ENCODE measurements at regions of chr7 and their contacts with region 1.

Region 1: DNA sequence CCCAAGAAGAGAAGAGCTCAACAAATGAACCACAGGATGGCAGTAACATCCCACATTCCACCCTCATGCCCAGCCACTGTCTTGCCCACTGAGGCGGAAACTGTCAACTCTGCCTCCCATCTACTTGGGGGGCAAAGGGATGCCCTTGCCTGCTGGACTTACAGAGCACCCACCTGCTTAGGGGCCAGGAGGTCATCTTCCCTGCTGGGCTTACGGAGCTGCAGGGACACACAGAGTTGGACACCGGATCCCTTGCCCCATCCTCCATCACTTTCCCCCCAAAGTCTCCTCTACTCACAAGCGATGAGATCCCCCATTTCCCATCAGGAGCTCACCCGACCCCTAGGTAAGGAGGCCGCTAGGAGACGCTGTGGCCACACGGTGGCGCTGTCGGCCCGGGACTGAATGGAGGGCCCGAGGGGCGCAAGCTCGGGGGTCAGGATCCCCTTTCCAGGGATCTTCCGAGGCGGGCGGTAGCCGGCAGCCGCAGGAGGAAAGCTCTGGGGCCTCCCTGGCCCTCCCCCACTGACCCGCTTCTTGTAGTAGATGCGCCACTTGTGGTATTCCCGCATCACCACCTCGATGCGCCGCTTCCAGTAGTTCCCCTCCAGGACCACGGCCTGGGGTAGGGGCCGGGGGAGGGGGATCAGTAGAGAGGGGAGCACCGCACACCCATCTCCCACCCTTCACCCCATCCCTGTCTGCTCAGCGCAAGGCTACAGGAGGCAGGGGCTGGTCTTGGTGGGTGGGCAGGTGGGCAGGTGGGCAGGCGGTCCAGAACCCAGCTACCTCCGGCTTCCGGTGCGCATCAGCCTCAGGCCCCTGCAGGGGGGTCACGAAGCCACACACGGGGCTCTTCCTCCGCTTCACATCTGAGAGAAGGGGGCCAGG is 17.3 kb downstream of the MLXIPL start:
- H3K4me3 ChIP-seq: no peak overlapping the region
- H3K27ac ChIP-seq: no peak overlapping the region
- H3K4me1 ChIP-seq: no peaks in the 10 kb centered on the region
- CTCF ChIP-seq: peak; percentile 52; the same call in 1 of the 2 replicates

Region 2: DNA sequence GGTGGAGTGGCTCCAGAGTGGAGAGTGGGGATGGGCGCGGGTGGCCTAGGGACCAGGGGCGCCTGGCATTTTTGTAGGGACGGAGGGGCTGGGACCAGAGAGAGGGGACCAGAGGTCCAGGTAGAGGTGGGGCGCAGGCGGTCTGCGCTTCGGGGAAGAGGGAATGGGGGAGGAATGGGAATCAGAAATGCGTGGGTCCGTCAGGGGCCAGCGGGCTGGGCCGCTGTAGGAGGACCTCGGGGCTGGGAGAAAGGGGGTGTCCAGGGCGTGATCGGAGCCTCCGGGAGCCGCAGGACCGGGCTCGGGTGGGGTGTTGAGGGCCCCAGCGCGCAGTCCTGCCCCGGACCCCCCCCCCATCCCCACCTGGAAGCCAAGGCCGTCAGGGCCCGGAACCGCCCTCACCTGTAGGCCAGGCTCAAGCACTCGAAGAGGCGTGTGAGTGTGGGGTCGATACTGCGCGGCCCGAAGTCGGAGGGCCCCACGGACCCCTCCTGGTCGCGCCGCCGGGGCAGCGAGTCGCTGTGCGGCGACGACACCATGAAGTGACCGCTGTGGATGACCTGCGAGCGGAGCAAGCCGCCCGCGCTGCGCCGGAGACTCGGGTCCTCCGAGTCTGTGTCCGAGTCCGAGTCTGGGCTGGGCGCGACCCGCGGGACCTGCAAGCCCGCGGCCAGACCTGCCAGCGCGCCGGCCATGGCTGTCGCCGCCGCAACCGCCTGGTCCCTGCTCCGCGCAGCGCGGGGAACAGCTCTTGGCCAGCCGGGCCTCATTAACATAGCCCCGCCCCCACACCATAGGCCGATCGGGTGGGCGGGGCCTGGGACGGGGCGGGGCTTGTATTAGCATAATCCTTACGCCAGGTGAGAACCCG is 17.0 kb after region 1 on chr7 and contains the start of gene MLXIPL:
- CTCF ChIA-PET with region 1: interaction called, 12 read pairs
- POLR2A ChIA-PET with region 1: no interaction called
- H3K4me3 ChIP-seq: peak within 1 kb of the TSS; percentile 58
- H3K27ac ChIP-seq: peak within 1 kb of the TSS; percentile 57; the same call in 1 of the 2 replicates
- H3K4me1 ChIP-seq: no peaks in the 10 kb centered on the region
- CTCF ChIP-seq: no peak

Region 3: GRCh38 chr7:73674468-73675133 is 67.6 kb after region 1 on chr7:
- CTCF ChIA-PET with region 1: interaction called, 29 read pairs
- POLR2A ChIA-PET with region 1: no interaction called
- H3K4me3 ChIP-seq: no peak overlapping the region
- H3K27ac ChIP-seq: no peak overlapping the region
- H3K4me1 ChIP-seq: no peaks in the 10 kb centered on the region
- CTCF ChIP-seq: no peak

Region 4: DNA sequence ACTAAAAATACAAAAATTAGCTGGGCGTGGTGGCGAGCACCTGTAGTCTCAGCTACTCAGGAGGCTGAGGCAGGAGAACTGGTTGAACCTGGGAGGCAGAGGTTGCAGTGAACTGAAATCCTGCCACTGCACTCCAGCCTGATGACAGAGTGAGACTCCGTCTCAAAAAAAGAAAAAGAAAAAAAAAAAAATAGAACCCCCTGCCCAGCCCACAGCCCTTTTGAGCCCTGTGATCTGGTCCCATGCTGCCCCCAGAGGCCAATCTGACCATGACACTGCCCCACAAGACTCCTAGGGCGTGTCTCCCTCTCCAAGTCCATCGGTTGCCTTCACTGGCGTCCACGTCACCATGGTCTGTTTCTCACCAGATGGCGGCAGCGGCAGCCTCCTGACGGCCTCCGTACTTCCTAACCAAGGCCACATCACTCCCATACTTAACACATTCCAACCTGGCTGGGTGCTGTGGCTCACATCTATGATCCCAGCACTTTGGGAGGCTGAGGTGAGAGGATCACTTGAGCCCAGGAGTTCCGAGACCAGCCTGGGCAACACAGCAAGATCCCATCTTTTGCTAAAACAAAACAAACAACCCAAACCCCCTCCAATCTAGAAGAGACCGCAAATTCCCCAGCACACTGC is 94.4 kb after region 1 on chr7:
- CTCF ChIA-PET with region 1: interaction called, 12 read pairs
- POLR2A ChIA-PET with region 1: interaction called, 4 read pairs
- H3K4me3 ChIP-seq: no peak overlapping the region
- H3K27ac ChIP-seq: no peak overlapping the region
- H3K4me1 ChIP-seq: no peaks in the 10 kb centered on the region
- CTCF ChIP-seq: peak; percentile 71

Region 5: GRCh38 chr7:73726083-73726466 is 119.0 kb after region 1 on chr7:
- CTCF ChIA-PET with region 1: interaction called, 82 read pairs
- POLR2A ChIA-PET with region 1: interaction called, 4 read pairs
- H3K4me3 ChIP-seq: no peak overlapping the region
- H3K27ac ChIP-seq: no peak overlapping the region
- H3K4me1 ChIP-seq: no peaks in the 10 kb centered on the region
- CTCF ChIP-seq: no peak

Region 6: GRCh38 chr7:74026903-74027551 is 420.0 kb after region 1 on chr7:
- CTCF ChIA-PET with region 1: interaction called, 11 read pairs
- POLR2A ChIA-PET with region 1: no interaction called
- H3K4me3 ChIP-seq: no peak overlapping the region
- H3K27ac ChIP-seq: no peak overlapping the region
- H3K4me1 ChIP-seq: no peaks in the 10 kb centered on the region
- CTCF ChIP-seq: peak; percentile 61; the same call in 1 of the 2 replicates